SK-N-SH (cell line): ENCODE measurements at regions of chr20 and their contacts with region 1.

Region 1: GRCh38 chr20:44217342-44218092 is 6.9 kb upstream of the OSER1 start:
- DNase-seq: peak; percentile 62
- H3K4me3 ChIP-seq: no peak overlapping the region; a peak in 1 of 4 replicates
- H3K27ac ChIP-seq: no peak overlapping the region
- H3K4me1 ChIP-seq: peaks cover 0 to 9% of the 10 kb centered on the region in 2 experiments; a peak in 1 of 4 replicates
- H3K27me3 ChIP-seq: no peaks in the 10 kb centered on the region
- CTCF ChIP-seq: peak; percentile 84
- EP300 ChIP-seq: no peak
- RAD21 ChIP-seq: peak; percentile 92

Region 2: GRCh38 chr20:44137210-44137801 is 80.2 kb before region 1 on chr20:
- CTCF ChIA-PET with region 1: no interaction called
- POLR2A ChIA-PET with region 1: no interaction called
- DNase-seq: no peak
- H3K4me3 ChIP-seq: no peak overlapping the region
- H3K27ac ChIP-seq: no peak overlapping the region
- H3K4me1 ChIP-seq: no peaks in the 10 kb centered on the region
- H3K27me3 ChIP-seq: no peaks in the 10 kb centered on the region
- CTCF ChIP-seq: no peak
- EP300 ChIP-seq: no peak
- RAD21 ChIP-seq: no peak

Region 3: GRCh38 chr20:44231713-44232468 is 14.4 kb after region 1 on chr20:
- CTCF ChIA-PET with region 1: interaction called, 42 read pairs
- POLR2A ChIA-PET with region 1: no interaction called
- DNase-seq: no peak
- H3K4me3 ChIP-seq: no peak overlapping the region
- H3K27ac ChIP-seq: no peak overlapping the region
- H3K4me1 ChIP-seq: no peaks in the 10 kb centered on the region
- H3K27me3 ChIP-seq: no peaks in the 10 kb centered on the region
- CTCF ChIP-seq: no peak
- EP300 ChIP-seq: no peak
- RAD21 ChIP-seq: peak; percentile 17; the same call in 1 of the 2 replicates

Region 4: GRCh38 chr20:44247586-44248409 is 30.3 kb after region 1 on chr20:
- CTCF ChIA-PET with region 1: interaction called, 13 read pairs
- POLR2A ChIA-PET with region 1: no interaction called
- DNase-seq: peak; percentile 69
- H3K4me3 ChIP-seq: peak overlapping the region; percentile 52 to 53
- H3K27ac ChIP-seq: peak overlapping the region in 1 of 2 experiments; percentile 48; a peak in 1 of 4 replicates
- H3K4me1 ChIP-seq: peaks cover 0 to 4% of the 10 kb centered on the region in 2 experiments; a peak in 2 of 4 replicates
- H3K27me3 ChIP-seq: peaks cover 5% of the 10 kb centered on the region; the same call in 1 of the 2 replicates
- CTCF ChIP-seq: peak; percentile 55
- EP300 ChIP-seq: no peak
- RAD21 ChIP-seq: no peak

Region 5: GRCh38 chr20:44253528-44253927 is 36.0 kb after region 1 on chr20:
- CTCF ChIA-PET with region 1: interaction called, 13 read pairs
- POLR2A ChIA-PET with region 1: no interaction called
- DNase-seq: peak; percentile 55
- H3K4me3 ChIP-seq: no peak overlapping the region
- H3K27ac ChIP-seq: no peak overlapping the region
- H3K4me1 ChIP-seq: no peaks in the 10 kb centered on the region
- H3K27me3 ChIP-seq: no peaks in the 10 kb centered on the region
- CTCF ChIP-seq: no peak; the same call in 1 of the 2 replicates
- EP300 ChIP-seq: no peak
- RAD21 ChIP-seq: no peak

Region 6: GRCh38 chr20:44326391-44327159 is 109.1 kb after region 1 on chr20:
- CTCF ChIA-PET with region 1: interaction called, 12 read pairs
- POLR2A ChIA-PET with region 1: no interaction called
- DNase-seq: peak; percentile 52
- H3K4me3 ChIP-seq: no peak overlapping the region
- H3K27ac ChIP-seq: no peak overlapping the region
- H3K4me1 ChIP-seq: no peaks in the 10 kb centered on the region
- H3K27me3 ChIP-seq: no peaks in the 10 kb centered on the region
- CTCF ChIP-seq: no peak
- EP300 ChIP-seq: no peak
- RAD21 ChIP-seq: no peak

Region 7: DNA sequence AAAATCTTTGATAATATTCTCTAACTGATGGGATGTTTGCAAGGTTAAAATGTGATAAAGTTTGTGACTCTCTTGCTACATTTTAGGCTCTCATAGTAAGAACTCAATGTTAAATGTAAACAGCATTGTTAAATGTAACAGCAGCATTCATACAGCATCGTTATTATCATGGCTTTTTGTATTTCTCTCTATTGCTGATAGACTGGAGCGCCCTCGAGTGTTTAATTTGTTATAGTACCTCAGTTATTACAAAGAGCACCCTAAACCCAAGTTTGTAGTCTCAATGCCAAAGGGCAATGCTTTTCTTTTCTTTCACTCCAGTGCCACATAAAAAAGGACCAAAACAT is 243.3 kb after region 1 on chr20:
- CTCF ChIA-PET with region 1: interaction called, 51 read pairs
- POLR2A ChIA-PET with region 1: no interaction called
- DNase-seq: peak; percentile 57
- H3K4me3 ChIP-seq: no peak overlapping the region
- H3K27ac ChIP-seq: no peak overlapping the region
- H3K4me1 ChIP-seq: peaks cover 0 to 4% of the 10 kb centered on the region in 2 experiments; a peak in 1 of 4 replicates
- H3K27me3 ChIP-seq: no peaks in the 10 kb centered on the region
- CTCF ChIP-seq: peak; percentile 67
- EP300 ChIP-seq: no peak
- RAD21 ChIP-seq: peak; percentile 84

Region 8: DNA sequence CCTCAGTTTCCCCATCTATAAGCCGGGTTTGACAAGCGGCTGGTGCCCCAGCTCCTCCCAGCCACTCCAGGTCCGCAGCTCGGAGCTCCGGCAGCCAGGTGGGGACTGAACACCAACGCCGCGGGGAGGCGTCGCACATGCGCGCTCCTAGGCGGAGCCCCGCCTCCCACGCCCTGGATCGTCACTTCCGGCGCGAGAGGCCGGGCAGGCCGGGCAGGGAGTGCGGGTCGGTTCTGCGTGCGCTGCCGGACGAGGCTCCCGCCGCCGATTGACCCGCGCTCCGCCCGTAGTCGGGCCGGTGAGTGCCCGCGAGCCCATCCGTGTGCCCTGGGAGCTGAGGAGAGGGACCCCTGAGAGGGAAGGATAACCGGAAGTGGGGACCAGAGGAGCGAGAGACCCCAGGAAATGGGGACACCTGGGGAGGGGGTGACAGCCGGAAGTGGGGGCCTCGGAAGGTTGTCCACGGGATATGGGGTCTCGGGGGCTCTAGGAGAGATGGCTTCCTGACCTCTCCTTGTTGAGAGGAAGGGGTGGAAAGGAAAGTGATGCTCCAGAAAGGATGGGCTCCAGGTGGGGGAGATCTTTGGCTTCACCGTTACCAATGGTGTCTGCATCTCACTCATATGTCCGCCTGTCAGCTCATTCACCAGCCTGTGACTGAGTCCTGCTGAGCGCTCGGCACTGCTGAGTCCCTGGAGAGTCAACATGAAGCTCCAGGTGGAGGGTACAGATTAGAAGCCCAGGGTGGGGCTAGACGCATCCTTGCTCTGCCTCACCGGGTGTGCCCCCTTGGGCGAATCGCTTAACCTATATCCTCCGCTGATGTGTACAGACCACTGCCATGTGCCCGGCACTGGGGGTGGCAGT is 258.4 kb after region 1 on chr20 and contains the start of gene TTPAL:
- CTCF ChIA-PET with region 1: interaction called, 25 read pairs
- POLR2A ChIA-PET with region 1: no interaction called
- DNase-seq: peak; percentile 97
- H3K4me3 ChIP-seq: peak within 1 kb of the TSS; percentile 81 to 82
- H3K27ac ChIP-seq: peak within 1 kb of the TSS; percentile 72 to 89
- H3K4me1 ChIP-seq: peaks cover 0 to 16% of the 10 kb centered on the region in 2 experiments; a peak in 2 of 4 replicates
- H3K27me3 ChIP-seq: no peaks in the 10 kb centered on the region
- CTCF ChIP-seq: peak; percentile 36
- EP300 ChIP-seq: no peak
- RAD21 ChIP-seq: 0 out of 2 replicates have a peak, but pooled peaks have one; percentile 16
- polyA plus RNA-seq, gene TTPAL: 4.9 and 5.7 TPM in 2 replicates

Region 9: GRCh38 chr20:44805979-44806620 is 588.6 kb after region 1 on chr20:
- CTCF ChIA-PET with region 1: no interaction called
- POLR2A ChIA-PET with region 1: no interaction called
- DNase-seq: peak; percentile 91
- H3K4me3 ChIP-seq: no peak overlapping the region
- H3K27ac ChIP-seq: peak overlapping the region in 1 of 2 experiments; percentile 90; a peak in 2 of 4 replicates
- H3K4me1 ChIP-seq: peaks cover 0 to 68% of the 10 kb centered on the region in 2 experiments; a peak in 2 of 4 replicates
- H3K27me3 ChIP-seq: peaks cover 34% of the 10 kb centered on the region
- CTCF ChIP-seq: no peak
- EP300 ChIP-seq: peak in 1 of 2 experiments; percentile 66; a peak in 1 of 4 replicates
- RAD21 ChIP-seq: no peak

Region 10: DNA sequence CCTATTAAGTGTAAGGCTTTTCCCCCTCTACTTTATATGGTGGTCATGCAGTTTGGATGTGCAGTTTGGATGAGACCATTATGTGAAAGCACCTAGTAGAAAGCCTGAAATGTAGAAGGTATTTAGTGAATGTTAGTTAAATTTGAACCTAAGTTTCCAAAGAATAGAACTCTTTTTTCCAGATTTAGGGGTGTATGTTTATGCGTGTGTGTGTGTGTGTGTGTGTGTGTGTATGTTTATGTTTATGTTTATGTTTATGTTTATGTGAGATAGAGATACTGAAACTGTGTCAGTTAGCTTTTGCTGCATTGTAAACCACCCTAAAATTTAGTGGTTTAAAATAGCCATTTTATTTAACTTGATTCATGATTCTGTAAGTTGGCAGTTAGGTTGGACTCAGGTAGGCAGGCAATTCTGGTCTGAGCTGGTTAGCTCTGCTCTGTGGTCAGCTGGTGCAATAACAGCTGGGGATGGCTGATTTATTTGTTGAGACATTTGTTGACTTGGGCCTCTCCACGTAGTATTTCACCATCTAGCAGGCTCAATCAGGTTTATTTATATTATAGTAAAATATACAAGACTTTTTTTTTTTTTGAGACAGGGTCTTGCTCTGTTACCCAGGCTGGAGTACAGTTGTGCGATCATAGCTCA is 802.8 kb after region 1 on chr20:
- CTCF ChIA-PET with region 1: no interaction called
- POLR2A ChIA-PET with region 1: no interaction called
- DNase-seq: no peak
- H3K4me3 ChIP-seq: no peak overlapping the region
- H3K27ac ChIP-seq: peak overlapping the region in 1 of 2 experiments; percentile 58; a peak in 3 of 4 replicates
- H3K4me1 ChIP-seq: peaks cover 23% of the 10 kb centered on the region in 2 experiments
- H3K27me3 ChIP-seq: no peaks in the 10 kb centered on the region
- CTCF ChIP-seq: no peak
- EP300 ChIP-seq: no peak
- RAD21 ChIP-seq: no peak